ENCODE measurements at regions of chr13 and their contacts with region 1.

Region 1: DNA sequence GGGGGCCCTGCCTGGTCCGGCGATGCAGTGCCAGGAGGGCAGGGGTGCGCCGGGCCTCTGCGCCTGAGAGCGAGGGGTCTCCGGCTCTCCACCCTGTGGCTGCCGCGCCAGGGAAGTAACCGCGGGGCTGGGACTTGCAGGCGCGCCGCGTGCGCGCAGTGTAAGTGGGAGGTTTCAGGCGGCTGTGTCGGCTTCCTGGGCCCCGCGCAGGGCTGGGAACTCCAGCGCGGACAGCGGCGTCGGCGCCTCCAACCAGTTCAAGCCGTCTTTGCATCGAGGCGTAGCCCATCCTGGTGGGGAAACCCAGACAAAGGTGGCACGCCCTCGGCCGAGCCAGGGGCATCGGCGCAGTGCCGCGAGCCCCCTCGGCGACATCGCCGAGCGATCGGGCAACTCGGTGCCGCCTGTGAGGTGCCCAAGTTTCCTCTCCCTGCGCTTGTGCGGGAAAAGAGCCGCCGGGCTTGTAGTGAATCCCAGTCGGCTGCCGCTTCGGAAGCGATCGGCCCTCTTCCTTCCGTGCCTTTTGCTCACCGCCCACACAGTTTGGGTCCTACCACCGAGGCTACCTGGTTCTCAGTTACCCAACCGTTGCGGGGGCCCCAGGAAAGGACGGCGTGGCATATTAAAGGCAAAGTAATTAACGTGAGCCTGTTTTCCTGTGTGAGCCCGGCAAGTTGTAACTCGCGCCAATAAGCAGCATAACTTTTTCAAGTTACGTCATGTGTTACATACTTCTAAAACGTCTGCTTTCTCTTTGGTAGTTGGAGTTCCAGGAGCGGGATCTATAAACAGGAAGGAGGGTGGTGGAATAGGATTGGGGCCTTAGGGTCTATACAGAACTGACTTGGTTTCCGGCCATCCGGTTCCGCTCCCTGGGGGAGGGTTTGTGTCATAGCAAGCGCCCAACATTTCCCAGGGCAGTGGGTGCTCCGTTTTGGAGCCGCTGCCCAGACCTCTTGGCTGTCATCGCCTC is 1.2 kb downstream of the LRCH1 start:
- DNase-seq: peak; percentile 71 to 88 (median 78)
- ATAC-seq: peak; percentile 42 to 75 (median 69)
- H3K4me3 ChIP-seq: peak overlapping the region; percentile 75 to 100 (median 90)
- H3K27ac ChIP-seq: peak overlapping the region; percentile 85 to 98 (median 94)
- H3K4me1 ChIP-seq: peaks cover 0 to 41% (median 28%) of the 10 kb centered on the region in 12 donors
- H3K27me3 ChIP-seq: no peaks in the 10 kb centered on the region
- CTCF ChIP-seq: peak in 8 of 12 donors; percentile 10 to 38 (median 22)
- POLR2A ChIP-seq: no peak

Region 2: DNA sequence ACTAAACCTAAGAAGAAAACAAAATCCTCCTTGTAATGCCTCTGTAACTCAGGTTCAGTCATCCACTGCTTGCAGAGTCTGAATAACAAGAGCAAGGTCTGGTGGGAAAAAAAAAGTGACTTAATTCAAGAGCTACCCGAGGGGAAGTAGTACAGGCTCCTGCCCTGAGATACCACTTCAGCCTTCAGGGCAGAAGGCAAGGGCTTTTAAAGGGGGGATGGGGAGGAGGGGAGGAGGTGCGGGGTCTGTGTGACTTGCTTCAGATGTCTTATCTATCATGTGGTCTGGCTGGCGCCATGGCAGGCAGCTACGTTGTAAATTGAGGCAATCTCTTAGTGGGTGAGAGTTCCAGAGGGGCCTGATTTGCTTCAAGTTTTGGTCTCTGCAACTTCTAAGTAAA is 275.7 kb before region 1 on chr13:
- intact Hi-C with region 1: no loop called
- DNase-seq: no peak
- ATAC-seq: no peak
- H3K4me3 ChIP-seq: no peak overlapping the region
- H3K27ac ChIP-seq: no peak overlapping the region
- H3K4me1 ChIP-seq: no peaks in the 10 kb centered on the region
- H3K27me3 ChIP-seq: peaks cover 0 to 6% (median 0%) of the 10 kb centered on the region in 9 donors
- CTCF ChIP-seq: no peak
- POLR2A ChIP-seq: no peak

Region 3: GRCh38 chr13:46392967-46393366 is 161.2 kb before region 1 on chr13:
- intact Hi-C with region 1: no loop called
- DNase-seq: no peak
- ATAC-seq: no peak
- H3K4me3 ChIP-seq: no peak overlapping the region
- H3K27ac ChIP-seq: no peak overlapping the region
- H3K4me1 ChIP-seq: peaks cover 0 to 26% (median 0%) of the 10 kb centered on the region in 12 donors
- H3K27me3 ChIP-seq: peaks cover 0 to 11% (median 0%) of the 10 kb centered on the region in 9 donors
- CTCF ChIP-seq: no peak
- POLR2A ChIP-seq: no peak

Region 4: GRCh38 chr13:46571189-46571908 is 17.2 kb after region 1 on chr13:
- intact Hi-C with region 1: loop called in 1 of 10 experiments (anchors 2 kb)
- DNase-seq: peak in 2 of 5 donors; percentile 38 to 40
- ATAC-seq: peak in 3 of 4 donors; percentile 65 to 77 (median 71)
- H3K4me3 ChIP-seq: no peak overlapping the region
- H3K27ac ChIP-seq: peak overlapping the region in 7 of 12 donors; percentile 5 to 59 (median 40)
- H3K4me1 ChIP-seq: peaks cover 8 to 85% (median 45%) of the 10 kb centered on the region in 12 donors
- H3K27me3 ChIP-seq: no peaks in the 10 kb centered on the region
- CTCF ChIP-seq: no peak
- POLR2A ChIP-seq: no peak

Region 5: DNA sequence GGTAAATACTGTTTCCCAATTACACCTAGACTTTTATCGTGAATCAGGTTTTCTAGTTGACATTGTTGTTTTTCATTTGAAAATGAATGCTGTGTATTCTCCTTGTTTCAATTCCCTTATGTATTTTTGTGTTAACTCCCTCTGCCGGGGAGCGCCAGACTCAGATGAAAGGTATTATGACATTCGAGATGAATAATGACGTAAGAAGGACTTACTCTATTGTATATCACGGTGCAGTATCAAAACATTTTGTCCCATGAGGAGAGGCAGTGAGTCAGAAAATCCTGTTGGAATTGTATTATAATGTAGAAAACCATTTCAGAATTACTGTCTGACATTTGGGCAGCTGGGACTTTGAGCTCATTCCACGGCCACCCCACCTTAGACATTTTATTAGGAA is 60.4 kb after region 1 on chr13:
- intact Hi-C with region 1: loop called in 4 of 10 experiments (anchors 5 to 10 kb)
- DNase-seq: no peak
- ATAC-seq: peak in 2 of 4 donors; percentile 57 to 68
- H3K4me3 ChIP-seq: no peak overlapping the region
- H3K27ac ChIP-seq: peak overlapping the region in 10 of 12 donors; percentile 1 to 84 (median 78)
- H3K4me1 ChIP-seq: peaks cover 3 to 59% (median 38%) of the 10 kb centered on the region in 12 donors
- H3K27me3 ChIP-seq: no peaks in the 10 kb centered on the region
- CTCF ChIP-seq: peak in 3 of 12 donors; percentile 16 to 24 (median 21)
- POLR2A ChIP-seq: no peak

Region 6: GRCh38 chr13:46655377-46656180 is 101.4 kb after region 1 on chr13:
- intact Hi-C with region 1: loop called in 1 of 10 experiments (anchors 5 kb)
- DNase-seq: no peak
- ATAC-seq: peak; percentile 59 to 85 (median 74)
- H3K4me3 ChIP-seq: peak overlapping the region in 3 of 12 donors; percentile 2 to 6 (median 3)
- H3K27ac ChIP-seq: peak overlapping the region; percentile 15 to 77 (median 65)
- H3K4me1 ChIP-seq: peaks cover 10 to 51% (median 29%) of the 10 kb centered on the region in 12 donors
- H3K27me3 ChIP-seq: no peaks in the 10 kb centered on the region
- CTCF ChIP-seq: no peak
- POLR2A ChIP-seq: no peak

Region 7: DNA sequence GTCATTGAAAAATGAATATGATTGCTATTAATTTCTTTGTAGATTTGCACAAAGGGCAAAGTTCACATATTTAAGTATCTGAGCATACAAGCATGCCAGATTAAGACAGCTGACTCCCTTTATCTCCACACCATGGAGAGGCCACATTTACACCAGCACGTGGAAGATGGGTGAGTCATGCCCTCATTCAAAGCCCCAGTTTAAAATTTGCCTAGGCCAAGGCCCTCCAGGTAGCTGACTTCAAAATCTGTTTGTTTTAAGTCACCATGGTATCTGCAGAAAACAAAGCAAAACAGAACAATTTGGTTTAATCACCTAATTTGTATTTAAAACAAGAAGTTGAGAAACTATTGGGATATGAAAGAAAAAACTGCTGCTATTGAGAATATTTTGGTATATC is 133.6 kb after region 1 on chr13:
- intact Hi-C with region 1: loop called in 8 of 10 experiments (anchors 5 to 10 kb)
- DNase-seq: peak in 1 of 5 donors; percentile 32
- ATAC-seq: peak in 3 of 4 donors; percentile 81 to 88 (median 86)
- H3K4me3 ChIP-seq: no peak overlapping the region
- H3K27ac ChIP-seq: peak overlapping the region in 1 of 12 donors; percentile 61
- H3K4me1 ChIP-seq: peaks cover 4 to 54% (median 29%) of the 10 kb centered on the region in 12 donors
- H3K27me3 ChIP-seq: no peaks in the 10 kb centered on the region
- CTCF ChIP-seq: no peak
- POLR2A ChIP-seq: no peak

Region 8: DNA sequence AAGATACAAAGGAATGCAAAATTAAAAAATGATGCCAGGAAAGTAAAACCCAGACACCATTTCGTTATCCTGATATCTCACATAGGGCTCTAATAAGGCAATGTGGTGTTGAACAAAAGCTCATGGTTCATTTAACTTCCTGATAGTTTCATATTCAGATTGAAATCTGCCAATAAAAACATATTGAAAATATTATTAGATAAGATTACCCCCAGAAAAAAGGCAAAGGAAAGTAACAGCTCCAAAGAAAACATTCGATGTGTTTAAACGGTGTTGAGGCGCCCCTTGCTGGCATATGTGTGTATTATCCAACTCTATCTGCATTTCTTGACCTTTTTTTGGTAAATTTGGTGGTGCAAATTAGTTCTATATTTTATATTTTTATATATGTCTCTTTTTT is 166.9 kb after region 1 on chr13:
- intact Hi-C with region 1: loop called (anchors 1 to 5 kb)
- DNase-seq: peak in 4 of 5 donors; percentile 32 to 45 (median 36)
- ATAC-seq: peak in 3 of 4 donors; percentile 39 to 68 (median 68)
- H3K4me3 ChIP-seq: no peak overlapping the region
- H3K27ac ChIP-seq: no peak overlapping the region
- H3K4me1 ChIP-seq: peaks cover 0 to 7% (median 2%) of the 10 kb centered on the region in 12 donors
- H3K27me3 ChIP-seq: no peaks in the 10 kb centered on the region
- CTCF ChIP-seq: peak; percentile 48 to 83 (median 71)
- POLR2A ChIP-seq: no peak

Region 9: DNA sequence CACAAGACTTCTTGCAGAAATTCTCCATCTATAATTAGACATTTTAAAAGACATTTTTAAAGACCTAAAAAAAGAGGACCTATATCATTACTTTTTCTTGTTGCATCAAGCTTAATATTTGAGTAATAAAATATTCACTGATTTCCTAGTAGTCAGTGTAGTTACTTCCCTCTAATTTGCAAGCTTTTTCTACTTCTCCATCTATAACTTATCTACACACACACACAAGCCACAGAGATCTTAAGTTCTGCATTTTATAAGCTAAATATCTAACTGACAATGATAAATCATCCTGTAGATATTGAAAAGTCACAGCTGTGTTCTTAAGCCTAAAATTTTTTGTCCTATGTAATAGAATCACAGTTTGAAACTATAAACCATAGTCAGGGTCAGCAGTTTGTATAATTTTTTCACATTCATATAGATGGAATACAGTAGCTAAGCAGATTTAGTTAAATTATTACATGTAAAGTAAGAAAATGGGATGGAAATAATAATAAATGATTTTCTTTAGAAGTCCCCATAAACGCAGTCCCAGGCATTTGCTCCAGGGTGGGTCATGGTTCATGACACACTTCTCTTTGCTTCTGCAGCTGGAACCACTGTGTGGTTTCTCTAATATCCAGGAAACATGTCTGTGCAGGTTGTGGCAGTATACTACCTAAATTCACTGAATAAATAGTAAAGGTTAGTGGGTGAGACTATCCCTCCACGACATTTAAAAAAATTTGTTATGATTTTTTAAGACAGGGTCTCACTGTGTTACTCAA is 182.6 kb after region 1 on chr13:
- intact Hi-C with region 1: no loop called
- DNase-seq: no peak
- ATAC-seq: no peak
- H3K4me3 ChIP-seq: no peak overlapping the region
- H3K27ac ChIP-seq: no peak overlapping the region
- H3K4me1 ChIP-seq: no peaks in the 10 kb centered on the region
- H3K27me3 ChIP-seq: no peaks in the 10 kb centered on the region
- CTCF ChIP-seq: no peak
- POLR2A ChIP-seq: no peak

Measured in heart left ventricle (tissue), 16 donors.